Caco-2 (cell line): ENCODE measurements at regions of chr2 and their contacts with region 1.

Region 1: DNA sequence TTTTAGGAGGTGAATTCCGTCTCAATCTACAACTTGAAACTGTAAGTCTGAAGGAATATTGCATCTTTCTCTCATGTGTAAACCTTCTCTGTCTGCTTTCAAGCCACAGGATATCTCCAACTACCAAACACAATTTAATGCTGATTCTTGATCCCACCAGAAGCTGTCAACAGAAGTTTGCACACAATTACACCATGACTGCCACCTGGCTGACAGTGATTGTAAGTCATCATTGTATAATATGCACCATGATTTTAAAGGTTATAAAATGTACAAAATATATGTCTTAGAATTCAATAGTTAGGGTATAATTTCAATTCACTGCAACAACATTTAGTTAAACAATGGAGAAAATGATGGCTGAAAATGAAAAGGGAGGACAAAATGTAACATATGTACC is 18.4 kb downstream of the PREPL start:
- DNase-seq: peak in 1 of 2 experiments; percentile 43
- H3K4me3 ChIP-seq: no peak overlapping the region
- H3K4me3 Mint-ChIP-seq: no peak overlapping the region
- H3K27ac Mint-ChIP-seq: no peak overlapping the region
- H3K4me1 ChIP-seq: no peaks in the 10 kb centered on the region
- H3K4me1 Mint-ChIP-seq: no peaks in the 10 kb centered on the region
- H3K27me3 ChIP-seq: no peaks in the 10 kb centered on the region
- H3K27me3 Mint-ChIP-seq: no peaks in the 10 kb centered on the region
- CTCF ChIP-seq: peak; percentile 46 to 47

Region 2: DNA sequence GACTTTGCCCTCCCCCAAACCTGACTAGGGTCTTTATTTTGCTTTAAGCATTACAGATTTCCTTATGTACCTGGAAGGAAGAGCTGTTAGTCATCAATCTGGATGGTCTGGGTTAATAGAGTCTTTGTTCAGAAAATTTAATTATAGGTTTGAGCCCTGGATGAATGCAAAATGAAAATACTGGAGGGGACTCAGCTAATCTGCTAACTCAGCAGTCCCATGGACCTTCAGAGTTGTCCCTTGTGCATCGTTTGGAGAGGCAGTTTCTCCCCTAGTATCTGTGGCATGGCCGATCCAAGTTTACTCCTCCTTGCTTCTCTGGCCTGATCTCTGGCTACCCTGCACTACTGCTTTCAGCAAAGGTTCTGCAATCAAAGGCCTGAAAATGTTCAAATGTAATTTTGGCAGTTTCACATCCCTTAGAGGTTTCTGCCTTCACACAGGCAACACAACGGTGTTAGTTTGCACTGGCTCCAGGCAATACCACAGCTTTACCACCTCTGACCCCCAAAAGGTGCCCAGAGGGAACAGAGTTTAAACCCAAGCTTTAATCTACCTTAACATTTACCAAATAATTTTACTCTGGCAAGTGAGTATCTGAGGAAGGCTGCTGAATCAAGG is 881.3 kb before region 1 on chr2:
- CTCF ChIA-PET with region 1: no interaction called
- POLR2A ChIA-PET with region 1: no interaction called
- intact Hi-C with region 1: no loop called
- DNase-seq: no peak
- H3K4me3 ChIP-seq: no peak overlapping the region
- H3K4me3 Mint-ChIP-seq: no peak overlapping the region
- H3K27ac Mint-ChIP-seq: peak overlapping the region; percentile 89
- H3K4me1 ChIP-seq: peaks cover 75% of the 10 kb centered on the region
- H3K4me1 Mint-ChIP-seq: peaks cover 61% of the 10 kb centered on the region
- H3K27me3 ChIP-seq: no peaks in the 10 kb centered on the region
- H3K27me3 Mint-ChIP-seq: no peaks in the 10 kb centered on the region
- CTCF ChIP-seq: no peak

Region 3: GRCh38 chr2:44087036-44087713 is 255.7 kb before region 1 on chr2:
- CTCF ChIA-PET with region 1: no interaction called
- POLR2A ChIA-PET with region 1: no interaction called
- intact Hi-C with region 1: loop called (anchors 2 kb)
- DNase-seq: peak; percentile 83 to 93
- H3K4me3 ChIP-seq: peak overlapping the region; percentile 32
- H3K4me3 Mint-ChIP-seq: peak overlapping the region; percentile 73
- H3K27ac Mint-ChIP-seq: peak overlapping the region; percentile 80
- H3K4me1 ChIP-seq: peaks cover 30% of the 10 kb centered on the region
- H3K4me1 Mint-ChIP-seq: peaks cover 49% of the 10 kb centered on the region
- H3K27me3 ChIP-seq: no peaks in the 10 kb centered on the region
- H3K27me3 Mint-ChIP-seq: no peaks in the 10 kb centered on the region
- CTCF ChIP-seq: peak; percentile 94 to 96

Region 4: DNA sequence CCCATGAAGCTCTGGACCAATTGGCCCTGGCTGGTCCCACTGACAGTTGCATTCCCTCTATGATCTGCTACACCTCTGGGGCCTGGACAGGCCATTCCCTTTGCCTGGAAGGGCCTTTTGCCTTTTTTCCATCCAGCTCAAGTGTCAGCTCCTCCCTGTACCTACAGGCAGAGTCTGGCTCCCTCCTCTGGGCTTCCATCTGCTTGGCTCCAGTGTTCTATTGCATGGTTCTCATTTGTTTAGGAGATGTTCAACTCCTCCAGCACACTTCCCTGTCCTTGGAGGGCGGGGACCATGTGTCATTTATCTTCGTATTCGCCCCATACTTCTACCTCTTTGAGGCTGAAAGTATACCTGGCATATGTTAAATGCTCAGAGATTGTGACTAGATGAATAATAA is 1369.7 kb after region 1 on chr2:
- CTCF ChIA-PET with region 1: no interaction called
- POLR2A ChIA-PET with region 1: no interaction called
- intact Hi-C with region 1: no loop called
- DNase-seq: peak; percentile 21 to 51
- H3K4me3 ChIP-seq: no peak overlapping the region
- H3K4me3 Mint-ChIP-seq: no peak overlapping the region
- H3K27ac Mint-ChIP-seq: no peak overlapping the region
- H3K4me1 ChIP-seq: no peaks in the 10 kb centered on the region
- H3K4me1 Mint-ChIP-seq: no peaks in the 10 kb centered on the region
- H3K27me3 ChIP-seq: peaks cover 3% of the 10 kb centered on the region
- H3K27me3 Mint-ChIP-seq: no peaks in the 10 kb centered on the region
- CTCF ChIP-seq: peak in 1 of 2 experiments; percentile 17